SK-N-SH (cell line): ENCODE measurements at regions of chr17 and their contacts with region 1.

Region 1: DNA sequence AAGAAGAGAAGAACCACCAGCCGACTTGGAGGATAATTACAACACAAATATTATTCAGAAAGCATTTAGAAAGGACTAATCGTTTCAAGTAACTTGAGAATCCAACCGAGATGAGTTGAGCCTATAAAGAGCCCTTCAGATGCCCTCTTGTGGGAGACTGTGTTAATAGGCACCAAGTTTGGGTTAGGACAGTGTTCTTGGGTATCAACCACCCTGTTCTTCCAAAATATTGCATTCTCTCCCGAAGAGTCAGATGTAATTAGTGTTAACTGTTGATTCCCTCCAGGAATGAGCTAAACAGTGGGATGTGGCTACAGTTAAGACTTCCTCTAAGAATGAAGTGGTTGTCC is 87.8 kb upstream of the NOL11 start:
- DNase-seq: peak; percentile 59
- H3K4me3 ChIP-seq: no peak overlapping the region
- H3K27ac ChIP-seq: peak overlapping the region in 1 of 2 experiments; percentile 40; a peak in 1 of 4 replicates
- H3K4me1 ChIP-seq: peaks cover 0 to 4% of the 10 kb centered on the region in 2 experiments; a peak in 1 of 4 replicates
- H3K27me3 ChIP-seq: no peaks in the 10 kb centered on the region
- CTCF ChIP-seq: peak; percentile 72
- EP300 ChIP-seq: no peak
- RAD21 ChIP-seq: peak; percentile 74

Region 2: GRCh38 chr17:67326441-67326840 is 303.5 kb before region 1 on chr17:
- CTCF ChIA-PET with region 1: no interaction called
- POLR2A ChIA-PET with region 1: no interaction called
- DNase-seq: no peak
- H3K4me3 ChIP-seq: no peak overlapping the region
- H3K27ac ChIP-seq: no peak overlapping the region
- H3K4me1 ChIP-seq: no peaks in the 10 kb centered on the region
- H3K27me3 ChIP-seq: peaks cover 5% of the 10 kb centered on the region; the same call in 1 of the 2 replicates
- CTCF ChIP-seq: no peak
- EP300 ChIP-seq: no peak
- RAD21 ChIP-seq: no peak

Region 3: DNA sequence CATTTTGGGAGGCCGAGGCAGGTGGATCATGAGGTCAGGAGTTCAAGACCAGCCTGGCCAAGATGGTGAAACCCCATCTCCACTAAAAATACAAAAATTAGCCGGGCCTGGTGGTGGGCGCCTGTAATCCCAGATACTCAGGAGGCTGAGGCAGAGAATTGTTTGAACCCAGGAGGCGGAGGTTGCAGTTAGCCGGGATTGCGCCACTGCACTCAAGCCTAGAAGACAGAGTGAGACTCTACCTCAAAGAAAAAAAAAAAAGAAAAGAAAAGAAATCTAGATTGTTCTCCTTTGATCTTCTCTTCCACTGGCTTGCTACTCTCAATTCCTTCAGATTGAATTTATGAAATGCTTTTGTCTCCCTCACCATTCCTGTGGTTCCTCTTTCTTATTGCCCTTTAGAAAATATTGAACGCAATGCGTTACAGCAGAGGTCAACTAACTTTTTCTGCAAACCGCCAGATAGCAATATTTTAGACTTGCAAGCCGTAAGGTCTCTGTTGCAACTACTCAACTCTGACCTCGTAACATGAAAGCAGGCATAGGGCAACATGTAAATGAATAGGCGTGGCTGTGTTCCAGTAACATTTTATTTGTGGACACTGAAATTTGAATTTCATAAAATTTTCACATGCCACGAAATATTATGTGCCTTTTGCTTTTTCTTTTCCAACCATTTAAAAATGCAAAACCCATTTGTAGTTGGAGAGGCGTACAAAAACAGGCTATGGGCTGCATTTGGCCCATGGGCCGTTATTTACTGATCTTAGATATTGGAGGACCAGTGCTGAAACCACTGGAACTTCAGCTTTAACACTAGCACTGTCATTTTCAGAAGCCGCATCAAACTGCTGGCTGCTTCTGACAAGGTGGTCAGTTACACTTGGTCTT is 228.1 kb before region 1 on chr17:
- CTCF ChIA-PET with region 1: no interaction called
- POLR2A ChIA-PET with region 1: no interaction called
- DNase-seq: no peak
- H3K4me3 ChIP-seq: no peak overlapping the region
- H3K27ac ChIP-seq: no peak overlapping the region
- H3K4me1 ChIP-seq: peaks cover 6% of the 10 kb centered on the region in 2 experiments; a peak in 2 of 4 replicates
- H3K27me3 ChIP-seq: no peaks in the 10 kb centered on the region
- CTCF ChIP-seq: no peak
- EP300 ChIP-seq: no peak
- RAD21 ChIP-seq: no peak

Region 4: DNA sequence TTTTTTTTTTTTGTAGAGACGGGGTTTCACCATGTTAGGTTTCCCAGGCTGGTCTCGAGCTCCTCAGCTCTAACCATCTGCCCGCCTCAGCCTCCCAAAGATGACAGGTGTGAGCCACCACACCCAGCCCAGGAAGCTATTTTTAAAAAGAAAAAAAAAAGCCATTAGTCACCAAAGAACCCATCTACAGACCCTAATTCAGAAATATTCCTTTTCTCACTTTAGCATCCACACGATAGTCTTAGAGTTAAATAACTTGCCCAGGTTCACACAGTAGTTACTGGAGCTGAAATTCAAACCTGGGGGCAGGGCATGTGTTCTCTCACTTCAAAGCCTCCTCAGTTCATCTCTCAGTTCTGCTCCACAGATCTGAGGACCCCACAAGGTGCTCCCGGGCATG is 17.5 kb after region 1 on chr17:
- CTCF ChIA-PET with region 1: interaction called, 14 read pairs
- POLR2A ChIA-PET with region 1: no interaction called
- DNase-seq: no peak
- H3K4me3 ChIP-seq: no peak overlapping the region
- H3K27ac ChIP-seq: no peak overlapping the region
- H3K4me1 ChIP-seq: peaks cover 0 to 7% of the 10 kb centered on the region in 2 experiments; a peak in 1 of 4 replicates
- H3K27me3 ChIP-seq: no peaks in the 10 kb centered on the region
- CTCF ChIP-seq: no peak
- EP300 ChIP-seq: no peak
- RAD21 ChIP-seq: no peak

Region 5: GRCh38 chr17:67717624-67718329 is 87.8 kb after region 1 on chr17 and contains the start of gene NOL11:
- CTCF ChIA-PET with region 1: no interaction called
- POLR2A ChIA-PET with region 1: no interaction called
- DNase-seq: peak; percentile 99
- H3K4me3 ChIP-seq: peak within 1 kb of the TSS; percentile 94 to 96
- H3K27ac ChIP-seq: peak within 1 kb of the TSS; percentile 89 to 94
- H3K4me1 ChIP-seq: peaks cover 6 to 7% of the 10 kb centered on the region in 2 experiments; a peak in 3 of 4 replicates
- H3K27me3 ChIP-seq: no peaks in the 10 kb centered on the region
- CTCF ChIP-seq: peak; percentile 98
- EP300 ChIP-seq: peak in 1 of 2 experiments; percentile 28; a peak in 2 of 4 replicates
- RAD21 ChIP-seq: peak; percentile 70
- polyA plus RNA-seq, gene NOL11: 27.0 and 36.2 TPM in 2 replicates

Region 6: DNA sequence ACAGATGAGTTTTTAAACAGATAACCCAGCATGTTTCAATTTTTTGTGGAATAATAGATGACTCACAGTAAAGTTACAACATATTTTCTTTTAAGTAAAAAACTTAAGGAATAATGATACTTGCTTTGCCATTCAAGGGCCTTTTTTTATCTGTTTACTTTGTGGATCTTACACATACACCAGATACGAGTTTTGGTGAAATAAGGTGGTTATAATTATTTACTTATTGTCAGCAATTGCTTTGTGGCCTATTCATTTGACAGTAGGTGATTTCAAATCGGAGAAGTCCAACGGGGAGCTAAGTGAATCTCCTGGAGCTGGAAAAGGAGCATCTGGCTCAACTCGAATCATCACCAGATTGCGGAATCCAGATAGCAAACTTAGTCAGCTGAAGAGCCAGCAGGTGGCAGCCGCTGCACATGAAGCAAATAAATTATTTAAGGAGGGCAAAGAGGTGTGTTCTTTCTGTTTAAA is 261.7 kb after region 1 on chr17:
- CTCF ChIA-PET with region 1: no interaction called
- POLR2A ChIA-PET with region 1: no interaction called
- DNase-seq: peak; percentile 67
- H3K4me3 ChIP-seq: no peak overlapping the region
- H3K27ac ChIP-seq: peak overlapping the region; percentile 39 to 40
- H3K4me1 ChIP-seq: peaks cover 7 to 13% of the 10 kb centered on the region in 2 experiments; a peak in 3 of 4 replicates
- H3K27me3 ChIP-seq: no peaks in the 10 kb centered on the region
- CTCF ChIP-seq: peak; percentile 70
- EP300 ChIP-seq: no peak
- RAD21 ChIP-seq: peak; percentile 67